ENCODE measurements at regions of chr10 and their contacts with region 1.

Region 1: GRCh38 chr10:129963641-129964501 is at the start of gene EBF3:
- DNase-seq: peak; percentile 94
- ATAC-seq: peak; percentile 84
- total RNA-seq, gene EBF3: 38.9 TPM

Region 2: GRCh38 chr10:129030996-129031843 is 932.7 kb before region 1 on chr10:
- intact Hi-C with region 1: loop called (anchors 10 kb)
- DNase-seq: peak; percentile 78
- ATAC-seq: peak; percentile 91

Region 3: GRCh38 chr10:129929343-129930292 is 34.3 kb before region 1 on chr10:
- intact Hi-C with region 1: no loop called
- DNase-seq: peak; percentile 34
- ATAC-seq: no peak